OCI-LY7 (cell line): ENCODE measurements at regions of chr12 and their contacts with region 1.

Region 1: DNA sequence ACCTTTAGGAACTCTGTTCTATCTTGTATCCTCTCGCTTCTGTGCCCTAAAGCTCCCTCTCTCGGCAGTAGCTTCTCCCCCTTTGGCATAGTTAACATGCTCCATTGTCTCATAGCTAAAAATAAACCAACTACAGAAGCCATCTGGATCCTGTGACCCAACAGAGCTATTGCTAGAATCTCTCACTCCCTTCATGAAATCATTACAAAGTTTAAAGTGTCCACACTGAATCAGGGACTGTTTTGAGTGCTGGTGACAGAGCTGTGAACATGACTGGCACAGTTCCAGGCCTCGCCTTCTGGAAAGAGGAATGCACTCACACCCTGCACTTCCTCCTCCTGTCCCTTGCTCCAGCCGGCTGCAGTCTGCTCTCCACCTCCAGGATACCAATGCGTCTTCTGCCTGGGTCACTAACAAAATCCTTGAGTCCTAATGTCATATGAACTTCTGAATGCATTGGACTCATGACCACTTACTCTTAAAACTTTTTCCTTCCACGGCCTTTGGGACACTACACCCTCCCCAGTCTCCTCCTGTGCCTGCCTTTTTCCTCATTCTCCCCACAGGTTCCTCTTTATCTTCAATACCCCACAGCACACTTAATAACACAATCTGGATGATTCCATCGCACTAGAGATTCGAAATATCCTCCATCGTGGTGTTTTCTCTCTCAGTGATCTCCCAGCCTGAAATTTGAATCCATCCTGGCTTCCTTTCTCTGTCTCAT is 13.2 kb downstream of the PLBD1 start:
- DNase-seq: no peak
- H3K4me3 ChIP-seq: no peak overlapping the region
- H3K27ac ChIP-seq: no peak overlapping the region
- H3K4me1 ChIP-seq: peaks cover 14% of the 10 kb centered on the region
- CTCF ChIP-seq: no peak

Region 2: GRCh38 chr12:14540801-14541462 is 13.5 kb before region 1 on chr12:
- CTCF ChIA-PET with region 1: no interaction called
- POLR2A ChIA-PET with region 1: interaction called, 24 read pairs
- intact Hi-C with region 1: no loop called
- DNase-seq: no peak
- H3K4me3 ChIP-seq: no peak overlapping the region
- H3K27ac ChIP-seq: no peak overlapping the region
- H3K4me1 ChIP-seq: peaks cover 12% of the 10 kb centered on the region
- CTCF ChIP-seq: no peak